ENCODE measurements at regions of chr5 and their contacts with region 1.

Region 1: DNA sequence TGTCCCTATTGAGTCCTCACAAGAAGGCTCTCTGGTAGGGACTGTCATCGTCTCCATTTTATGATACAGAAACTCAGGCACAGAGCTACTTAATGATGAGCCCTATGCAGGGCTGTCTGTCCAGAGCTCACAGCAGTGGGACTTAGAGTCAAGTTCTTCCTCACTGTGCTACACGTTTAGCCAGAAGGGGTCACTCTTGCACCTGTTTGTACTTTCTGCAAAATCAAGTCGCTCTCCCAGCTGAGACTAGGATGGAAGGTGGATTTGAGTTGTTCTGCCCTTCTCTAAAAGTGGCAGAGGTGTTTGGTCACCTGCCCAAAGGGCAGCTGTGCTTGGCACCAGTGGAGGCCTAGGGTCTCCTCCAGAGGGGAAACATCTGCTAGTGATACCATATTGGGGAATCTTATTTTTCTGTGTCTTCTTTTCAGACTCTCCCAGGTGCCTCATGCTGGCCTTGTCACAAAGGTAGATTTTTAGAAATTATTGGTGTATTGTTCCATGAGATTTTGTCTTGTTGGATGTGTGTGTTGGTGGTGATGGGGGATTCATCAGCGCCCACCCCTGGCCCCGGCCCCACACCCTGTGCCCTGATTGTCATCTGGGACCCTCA is 104.2 kb downstream of the PPARGC1B start:
- DNase-seq: peak; percentile 72 to 77
- H3K4me3 ChIP-seq: no peak overlapping the region
- H3K4me3 Mint-ChIP-seq: no peak overlapping the region
- H3K27ac Mint-ChIP-seq: no peak overlapping the region
- H3K4me1 ChIP-seq: no peaks in the 10 kb centered on the region
- H3K4me1 Mint-ChIP-seq: no peaks in the 10 kb centered on the region
- H3K27me3 ChIP-seq: no peaks in the 10 kb centered on the region
- H3K27me3 Mint-ChIP-seq: no peaks in the 10 kb centered on the region
- CTCF ChIP-seq: peak; percentile 73 to 84

Region 2: GRCh38 chr5:149647334-149647733 is 187.0 kb before region 1 on chr5:
- CTCF ChIA-PET with region 1: no interaction called
- POLR2A ChIA-PET with region 1: no interaction called
- intact Hi-C with region 1: no loop called
- DNase-seq: no peak
- H3K4me3 ChIP-seq: no peak overlapping the region
- H3K4me3 Mint-ChIP-seq: no peak overlapping the region
- H3K27ac Mint-ChIP-seq: no peak overlapping the region
- H3K4me1 ChIP-seq: no peaks in the 10 kb centered on the region
- H3K4me1 Mint-ChIP-seq: no peaks in the 10 kb centered on the region
- H3K27me3 ChIP-seq: no peaks in the 10 kb centered on the region
- H3K27me3 Mint-ChIP-seq: no peaks in the 10 kb centered on the region
- CTCF ChIP-seq: no peak

Region 3: GRCh38 chr5:149852641-149853330 is 18.4 kb after region 1 on chr5:
- CTCF ChIA-PET with region 1: interaction called, 19 read pairs
- POLR2A ChIA-PET with region 1: no interaction called
- intact Hi-C with region 1: loop called (anchors 1 kb)
- DNase-seq: peak; percentile 79 to 81
- H3K4me3 ChIP-seq: no peak overlapping the region
- H3K4me3 Mint-ChIP-seq: no peak overlapping the region
- H3K27ac Mint-ChIP-seq: no peak overlapping the region
- H3K4me1 ChIP-seq: no peaks in the 10 kb centered on the region
- H3K4me1 Mint-ChIP-seq: no peaks in the 10 kb centered on the region
- H3K27me3 ChIP-seq: no peaks in the 10 kb centered on the region
- H3K27me3 Mint-ChIP-seq: no peaks in the 10 kb centered on the region
- CTCF ChIP-seq: peak; percentile 83 to 86

Region 4: GRCh38 chr5:149960272-149961185 is 126.2 kb after region 1 on chr5 and contains the start of gene SLC26A2:
- CTCF ChIA-PET with region 1: interaction called, 26 read pairs
- POLR2A ChIA-PET with region 1: interaction called, 4 read pairs
- intact Hi-C with region 1: loop called (anchors 1 kb)
- DNase-seq: peak; percentile 98 to 99
- H3K4me3 ChIP-seq: peak within 1 kb of the TSS; percentile 90
- H3K4me3 Mint-ChIP-seq: peak within 1 kb of the TSS; percentile 90
- H3K27ac Mint-ChIP-seq: peak within 1 kb of the TSS; percentile 96
- H3K4me1 ChIP-seq: peaks cover 25% of the 10 kb centered on the region
- H3K4me1 Mint-ChIP-seq: peaks cover 32% of the 10 kb centered on the region
- H3K27me3 ChIP-seq: no peaks in the 10 kb centered on the region
- H3K27me3 Mint-ChIP-seq: no peaks in the 10 kb centered on the region
- CTCF ChIP-seq: no peak
- total RNA-seq, gene SLC26A2: 43.9 and 49.1 TPM in 2 replicates

Region 5: DNA sequence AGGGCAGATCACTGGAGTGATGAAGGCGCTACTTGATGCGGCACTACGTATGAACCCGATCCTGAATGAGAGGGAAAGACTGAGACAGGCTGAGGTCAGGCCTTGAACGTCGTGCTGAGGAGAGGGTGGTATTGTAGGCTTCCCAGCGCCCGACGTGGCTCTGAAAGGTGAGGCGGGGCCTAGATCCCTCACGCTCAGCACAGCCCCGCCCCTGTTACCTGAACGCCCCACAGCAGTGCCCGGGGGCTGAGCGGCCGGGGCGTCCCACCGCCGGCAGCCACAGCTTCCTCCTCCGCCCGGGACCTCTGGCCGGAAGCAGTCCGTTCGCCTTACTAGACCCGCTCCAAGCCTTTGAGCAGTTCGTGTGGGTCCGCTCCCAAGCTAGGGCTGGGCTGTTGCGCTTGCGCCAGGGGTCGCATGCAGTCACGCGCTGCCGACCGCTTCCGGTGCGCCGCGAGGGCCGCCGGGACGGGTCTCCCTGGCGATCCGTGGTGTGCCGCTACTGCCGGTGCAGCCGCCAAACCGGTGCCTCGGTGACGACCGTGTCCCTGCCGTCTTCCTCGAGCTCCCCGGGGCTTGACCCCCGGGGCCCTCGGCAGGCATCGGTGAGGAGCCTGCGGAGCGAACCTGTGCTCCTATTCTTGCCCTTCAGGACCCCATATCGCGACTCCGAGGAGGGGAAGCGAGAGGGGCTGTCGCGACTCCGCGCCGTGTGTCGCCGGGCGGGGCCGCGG is 166.1 kb after region 1 on chr5 and contains the starts of genes HMGXB3 and TIGD6:
- CTCF ChIA-PET with region 1: interaction called, 10 read pairs
- POLR2A ChIA-PET with region 1: no interaction called
- intact Hi-C with region 1: no loop called
- DNase-seq: peak; percentile 95 to 97
- H3K4me3 ChIP-seq: peak within 1 kb of the TSS; percentile 72
- H3K4me3 Mint-ChIP-seq: peak within 1 kb of the TSS; percentile 85
- H3K27ac Mint-ChIP-seq: peak within 1 kb of the TSS; percentile 86
- H3K4me1 ChIP-seq: peaks cover 34% of the 10 kb centered on the region
- H3K4me1 Mint-ChIP-seq: peaks cover 42% of the 10 kb centered on the region
- H3K27me3 ChIP-seq: no peaks in the 10 kb centered on the region
- H3K27me3 Mint-ChIP-seq: no peaks in the 10 kb centered on the region
- CTCF ChIP-seq: no peak
- total RNA-seq, gene HMGXB3: 43.8 and 49.5 TPM in 2 replicates
- total RNA-seq, gene TIGD6: 3.0 and 4.3 TPM in 2 replicates

Region 6: DNA sequence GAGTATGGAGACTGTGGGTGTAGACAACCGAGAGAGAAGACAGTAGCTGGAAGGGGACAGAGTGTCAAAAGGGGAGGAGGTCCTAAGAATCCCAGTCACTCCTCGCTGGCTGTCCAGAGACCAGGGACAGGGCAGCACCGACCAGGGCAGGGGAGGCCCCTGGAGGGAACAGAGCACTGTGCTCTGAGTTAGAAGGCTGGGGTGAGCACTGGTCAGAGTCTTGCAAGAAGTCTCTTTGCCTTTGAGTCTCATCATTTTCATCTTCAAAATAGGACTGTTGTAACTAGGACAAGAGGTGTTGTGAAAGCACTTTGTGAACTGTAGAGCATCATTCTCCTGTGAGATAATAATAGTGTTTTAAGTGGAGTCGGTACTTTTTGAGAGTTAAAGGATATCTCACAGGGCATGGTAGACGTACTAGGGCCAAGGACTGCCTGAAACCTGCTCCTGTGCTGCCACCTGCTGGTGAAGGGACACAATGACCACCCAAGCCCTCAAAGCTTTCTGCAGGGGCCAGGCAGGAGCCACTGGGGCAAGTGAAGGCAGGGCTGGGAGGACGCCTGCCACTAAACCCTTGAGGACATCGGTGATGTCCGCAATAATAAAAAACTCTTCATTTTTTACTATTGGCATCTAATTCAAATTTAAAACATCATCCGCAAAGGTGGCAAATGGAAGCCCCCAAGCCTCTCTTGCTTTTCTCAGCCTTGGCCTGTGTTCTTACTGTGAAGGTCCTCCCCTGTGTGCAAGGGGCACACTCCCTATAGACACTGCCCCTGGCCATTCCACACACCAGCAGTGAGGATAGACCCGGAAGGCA is 383.7 kb after region 1 on chr5:
- CTCF ChIA-PET with region 1: no interaction called
- POLR2A ChIA-PET with region 1: no interaction called
- intact Hi-C with region 1: loop called (anchors 10 kb)
- DNase-seq: peak; percentile 83 to 89
- H3K4me3 ChIP-seq: no peak overlapping the region
- H3K4me3 Mint-ChIP-seq: no peak overlapping the region
- H3K27ac Mint-ChIP-seq: peak overlapping the region; percentile 54
- H3K4me1 ChIP-seq: peaks cover 19% of the 10 kb centered on the region
- H3K4me1 Mint-ChIP-seq: peaks cover 18% of the 10 kb centered on the region
- H3K27me3 ChIP-seq: no peaks in the 10 kb centered on the region
- H3K27me3 Mint-ChIP-seq: no peaks in the 10 kb centered on the region
- CTCF ChIP-seq: peak; percentile 83 to 93